ENCODE measurements at regions of chr9 and their contacts with region 1.

Region 1: GRCh38 chr9:99231711-99232110 is 9.6 kb downstream of the SEC61B start:
- DNase-seq: peak; percentile 32 to 66 (median 64)
- H3K4me3 ChIP-seq: no peak overlapping the region
- H3K27ac ChIP-seq: no peak overlapping the region
- H3K4me1 ChIP-seq: peaks cover 4 to 20% (median 10%) of the 10 kb centered on the region in 4 experiments
- H3K27me3 ChIP-seq: no peaks in the 10 kb centered on the region

Region 2: DNA sequence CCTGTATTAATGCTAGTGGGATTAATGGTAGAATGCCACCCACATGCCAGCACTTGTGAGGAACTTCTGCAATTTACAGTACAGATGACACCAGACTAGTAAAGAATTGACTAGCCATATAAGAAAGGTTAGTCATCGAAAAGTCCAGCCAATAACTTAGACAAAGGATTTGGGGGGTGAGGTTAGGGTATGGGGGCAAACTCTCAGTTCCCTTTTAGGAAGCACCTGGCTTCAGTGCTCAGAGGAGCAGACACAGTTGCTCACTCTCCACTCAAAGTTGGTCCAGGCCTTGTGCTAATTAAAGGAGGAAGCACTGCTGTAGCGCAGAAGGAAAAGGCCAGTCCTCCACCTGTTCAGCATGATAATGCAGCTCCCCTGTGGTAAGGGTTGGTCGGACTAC is 101.6 kb before region 1 on chr9:
- CTCF ChIA-PET with region 1: no interaction called
- POLR2A ChIA-PET with region 1: no interaction called
- DNase-seq: peak; percentile 70 to 97 (median 95)
- H3K4me3 ChIP-seq: peak overlapping the region in 1 of 7 experiments; percentile 4
- H3K27ac ChIP-seq: no peak overlapping the region
- H3K4me1 ChIP-seq: peaks cover 13 to 29% (median 18%) of the 10 kb centered on the region in 4 experiments
- H3K27me3 ChIP-seq: no peaks in the 10 kb centered on the region

Region 3: DNA sequence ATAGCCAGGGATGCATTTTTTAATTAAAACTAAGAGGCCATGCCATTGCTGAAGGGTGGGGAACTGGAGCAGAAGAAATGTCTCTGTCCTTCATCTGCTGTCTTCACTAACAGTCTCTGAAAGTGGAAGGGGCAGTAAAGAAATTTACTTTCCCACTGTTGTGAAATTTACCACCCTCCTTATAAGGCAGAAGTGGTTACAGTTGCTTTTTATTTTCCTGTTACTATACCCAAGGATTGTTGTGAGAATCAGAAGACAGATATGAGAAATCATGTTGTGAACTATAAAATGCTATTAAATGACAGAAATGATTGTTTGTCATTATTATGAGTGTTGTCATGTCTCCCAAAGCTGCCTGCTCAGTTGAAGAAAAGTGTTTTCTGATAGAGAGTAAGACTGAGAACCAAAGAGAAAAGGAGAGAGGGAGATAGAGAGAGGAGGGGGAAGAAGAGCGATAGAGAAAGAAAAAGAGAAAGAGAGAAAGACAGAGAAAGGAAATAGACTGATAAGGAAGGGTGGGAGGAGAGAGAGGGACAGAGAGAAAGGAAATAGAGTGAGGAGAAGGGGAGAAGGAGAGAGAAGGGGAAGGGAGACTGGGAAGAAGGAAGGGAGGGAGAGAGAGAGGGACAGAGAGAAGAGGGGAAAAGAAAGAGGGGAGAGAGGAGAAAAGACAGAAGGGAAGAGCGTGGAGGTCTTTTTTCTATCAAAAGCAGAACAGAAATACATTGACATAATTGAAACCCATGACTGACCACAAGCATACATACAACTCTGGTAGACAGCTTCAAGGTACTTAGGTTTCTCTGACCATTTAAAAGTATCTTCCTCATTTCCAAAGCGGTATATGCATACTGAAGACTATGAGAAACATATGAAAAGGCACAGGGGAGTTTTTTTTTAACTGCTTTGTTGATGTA is 12.9 kb after region 1 on chr9:
- CTCF ChIA-PET with region 1: interaction called, 35 read pairs
- POLR2A ChIA-PET with region 1: no interaction called
- DNase-seq: peak in 2 of 3 donors; percentile 31 to 46
- H3K4me3 ChIP-seq: no peak overlapping the region
- H3K27ac ChIP-seq: no peak overlapping the region
- H3K4me1 ChIP-seq: peaks cover 0 to 22% (median 4%) of the 10 kb centered on the region in 4 experiments
- H3K27me3 ChIP-seq: no peaks in the 10 kb centered on the region

Region 4: DNA sequence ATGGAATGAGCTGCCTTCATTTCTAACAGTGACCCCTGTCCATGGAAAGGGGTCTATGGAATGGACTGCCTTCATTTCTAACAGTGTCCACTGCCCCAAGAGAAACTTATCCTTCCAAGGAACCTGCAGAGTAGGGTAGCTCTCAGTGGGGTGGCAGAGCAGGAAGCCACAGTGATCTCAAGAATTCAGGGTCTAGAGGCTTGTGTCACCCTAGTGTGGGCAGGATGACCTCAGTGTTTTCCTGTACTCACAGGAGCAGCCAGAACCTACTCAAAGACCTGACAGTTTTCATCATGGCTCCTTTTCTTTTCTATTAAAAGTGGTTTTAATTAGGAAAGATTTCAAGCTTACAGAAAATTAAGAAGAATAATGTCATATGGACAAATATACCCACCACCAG is 17.9 kb after region 1 on chr9:
- CTCF ChIA-PET with region 1: interaction called, 35 read pairs
- POLR2A ChIA-PET with region 1: no interaction called
- DNase-seq: peak in 2 of 3 donors; percentile 33 to 35
- H3K4me3 ChIP-seq: no peak overlapping the region
- H3K27ac ChIP-seq: no peak overlapping the region
- H3K4me1 ChIP-seq: peaks cover 0 to 18% (median 9%) of the 10 kb centered on the region in 4 experiments
- H3K27me3 ChIP-seq: no peaks in the 10 kb centered on the region

Region 5: GRCh38 chr9:99259231-99259918 is 27.7 kb after region 1 on chr9:
- CTCF ChIA-PET with region 1: interaction called, 15 read pairs
- POLR2A ChIA-PET with region 1: no interaction called
- DNase-seq: peak in 2 of 3 donors; percentile 36 to 57
- H3K4me3 ChIP-seq: peak overlapping the region in 4 of 7 experiments; percentile 3 to 65 (median 30)
- H3K27ac ChIP-seq: no peak overlapping the region
- H3K4me1 ChIP-seq: peaks cover 0 to 9% (median 5%) of the 10 kb centered on the region in 4 experiments
- H3K27me3 ChIP-seq: no peaks in the 10 kb centered on the region